Gastrocnemius medialis (tissue), 4 donors: ENCODE measurements at regions of chr18 and their contacts with region 1.

Region 1: GRCh38 chr18:36284671-36285295 is 12.7 kb upstream of the FHOD3 start:
- DNase-seq: no peak
- ATAC-seq: peak; percentile 58 to 62
- H3K4me3 ChIP-seq: no peak overlapping the region
- H3K27ac ChIP-seq: no peak overlapping the region
- H3K4me1 ChIP-seq: no peaks in the 10 kb centered on the region
- H3K27me3 ChIP-seq: peaks cover 0 to 6% (median 0%) of the 10 kb centered on the region in 3 donors
- CTCF ChIP-seq: peak; percentile 71 to 88 (median 83)
- POLR2A ChIP-seq: no peak

Region 2: GRCh38 chr18:35756506-35757117 is 528.2 kb before region 1 on chr18:
- in situ Hi-C with region 1: loop called in 3 of 4 experiments (anchors 10 to 25 kb)
- intact Hi-C with region 1: loop called (anchors 5 kb)
- DNase-seq: peak in 1 of 2 donors; percentile 22
- ATAC-seq: peak; percentile 54 to 66
- H3K4me3 ChIP-seq: no peak overlapping the region
- H3K27ac ChIP-seq: no peak overlapping the region
- H3K4me1 ChIP-seq: no peaks in the 10 kb centered on the region
- H3K27me3 ChIP-seq: no peaks in the 10 kb centered on the region
- CTCF ChIP-seq: peak; percentile 46 to 73 (median 60)
- POLR2A ChIP-seq: no peak

Region 3: DNA sequence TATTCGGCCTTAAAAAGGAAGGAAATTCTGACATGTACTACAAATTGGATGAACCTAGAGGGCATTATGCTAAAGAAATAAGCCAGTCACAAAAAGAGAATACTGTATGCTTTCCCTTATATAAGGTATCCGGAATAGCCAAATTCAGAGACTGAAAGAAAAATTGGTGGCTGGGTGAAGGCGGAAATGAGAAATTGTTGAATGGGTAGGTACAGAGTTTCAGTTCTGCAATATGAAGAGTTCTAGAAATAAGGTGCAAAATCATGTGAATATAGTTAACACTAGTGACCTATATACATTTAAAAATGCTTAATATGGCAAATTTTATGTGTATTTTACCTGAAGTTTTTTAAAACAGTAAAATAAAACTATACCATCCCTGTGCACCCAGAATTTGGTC is 269.2 kb before region 1 on chr18:
- in situ Hi-C with region 1: loop called in 3 of 4 experiments (anchors 5 to 10 kb)
- intact Hi-C with region 1: loop called (anchors 1 kb)
- DNase-seq: no peak
- ATAC-seq: no peak
- H3K4me3 ChIP-seq: no peak overlapping the region
- H3K27ac ChIP-seq: no peak overlapping the region
- H3K4me1 ChIP-seq: peaks cover 3% of the 10 kb centered on the region in 2 donors
- H3K27me3 ChIP-seq: no peaks in the 10 kb centered on the region
- CTCF ChIP-seq: no peak
- POLR2A ChIP-seq: no peak

Region 4: DNA sequence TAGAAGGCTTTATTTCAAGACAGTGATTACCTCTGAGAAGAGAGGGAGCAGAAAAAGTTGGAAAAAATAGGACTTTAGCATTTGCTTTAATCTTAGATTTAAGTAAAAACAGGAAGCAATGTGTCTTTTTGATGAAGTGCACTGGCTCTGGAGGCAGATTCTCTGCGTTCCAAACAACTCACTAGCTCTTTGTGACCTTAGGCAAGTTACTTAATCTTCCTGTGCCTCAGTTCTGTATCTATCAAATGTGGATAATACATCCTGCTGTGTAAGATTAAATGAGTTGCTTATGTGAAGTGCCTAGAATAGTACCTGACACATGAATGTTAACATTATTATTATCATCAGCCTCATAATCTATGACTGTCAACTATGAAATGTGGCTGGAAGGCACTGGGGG is 259.8 kb before region 1 on chr18:
- in situ Hi-C with region 1: loop called in 2 of 4 experiments (anchors 5 to 10 kb)
- intact Hi-C with region 1: no loop called
- DNase-seq: no peak
- ATAC-seq: no peak
- H3K4me3 ChIP-seq: no peak overlapping the region
- H3K27ac ChIP-seq: no peak overlapping the region
- H3K4me1 ChIP-seq: no peaks in the 10 kb centered on the region
- H3K27me3 ChIP-seq: no peaks in the 10 kb centered on the region
- CTCF ChIP-seq: no peak
- POLR2A ChIP-seq: no peak

Region 5: DNA sequence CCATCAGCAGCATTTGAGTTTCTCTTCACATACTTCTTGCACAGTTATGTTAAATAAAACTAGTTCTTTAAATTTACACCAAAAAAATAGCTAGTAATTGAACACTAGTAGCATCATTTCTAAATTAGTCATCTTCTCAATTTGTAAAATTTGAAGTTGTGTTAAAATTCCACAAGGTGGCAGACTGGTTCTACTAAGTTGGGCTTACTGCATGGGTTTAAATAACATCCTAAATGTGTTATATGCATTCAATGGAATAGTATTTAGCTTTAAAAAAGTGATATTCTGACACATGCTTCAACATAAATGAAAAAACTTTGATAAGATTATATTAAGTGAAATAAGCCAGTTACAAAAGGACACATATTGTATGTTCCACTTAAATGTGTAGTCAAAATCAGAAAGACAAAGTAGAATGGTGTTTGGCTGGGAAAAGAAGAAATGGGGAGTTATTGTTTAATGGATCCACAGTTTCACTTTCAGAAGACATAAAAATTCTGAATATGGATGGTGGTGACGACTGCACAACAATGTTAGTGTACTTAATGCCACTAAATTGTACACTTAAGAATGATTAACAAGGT is 188.8 kb before region 1 on chr18:
- in situ Hi-C with region 1: loop called (anchors 5 to 10 kb)
- intact Hi-C with region 1: loop called (anchors 1 kb)
- DNase-seq: no peak
- ATAC-seq: no peak
- H3K4me3 ChIP-seq: no peak overlapping the region
- H3K27ac ChIP-seq: no peak overlapping the region
- H3K4me1 ChIP-seq: peaks cover 0 to 6% of the 10 kb centered on the region in 2 donors
- H3K27me3 ChIP-seq: no peaks in the 10 kb centered on the region
- CTCF ChIP-seq: peak in 4 of 5 experiments; percentile 29 to 46 (median 30)
- POLR2A ChIP-seq: no peak

Region 6: DNA sequence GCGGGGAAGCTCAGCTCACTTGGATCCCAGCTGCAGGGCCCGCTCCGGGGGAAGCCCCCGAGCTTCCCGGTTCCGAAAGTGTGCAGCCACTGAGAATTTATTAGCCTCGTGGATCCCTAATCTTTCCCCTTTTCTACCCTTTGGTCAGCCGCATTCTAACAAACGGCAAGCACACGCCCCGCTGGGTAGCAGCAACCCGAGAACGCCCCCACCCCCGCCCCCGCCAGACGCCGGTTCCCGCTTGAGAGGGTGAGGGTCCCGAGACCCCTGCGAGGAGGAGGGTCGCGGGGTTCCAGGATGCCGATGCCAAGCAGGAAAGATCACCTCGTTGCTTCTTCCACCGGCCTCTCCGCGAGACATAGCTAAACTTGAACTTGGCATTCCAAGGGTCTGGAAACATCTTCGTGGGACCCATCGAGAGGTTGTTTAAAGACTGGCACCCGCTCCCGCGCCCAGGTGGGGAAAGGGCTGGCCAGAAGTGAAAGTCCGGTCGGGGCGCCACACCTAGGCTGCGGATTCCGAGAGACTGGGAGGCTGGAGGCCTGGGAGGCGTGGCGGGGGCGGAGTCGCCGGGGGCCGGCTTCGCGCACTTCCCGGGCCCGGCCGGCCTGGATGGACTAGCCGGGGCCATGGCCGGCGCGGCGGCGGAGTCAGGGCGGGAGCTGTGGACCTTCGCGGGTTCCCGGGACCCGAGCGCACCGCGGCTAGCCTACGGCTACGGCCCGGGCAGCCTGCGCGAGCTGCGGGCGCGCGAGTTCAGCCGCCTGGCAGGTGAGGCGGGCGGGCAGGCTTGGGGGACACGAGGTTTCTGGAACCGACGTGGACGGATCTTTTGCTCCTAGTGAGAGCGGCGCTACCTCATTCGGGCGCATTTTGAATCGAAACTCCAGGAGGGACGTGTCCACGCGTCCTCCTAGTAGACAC is 97.6 kb before region 1 on chr18 and contains the start of gene MOCOS:
- in situ Hi-C with region 1: no loop called
- intact Hi-C with region 1: loop called (anchors 10 kb)
- DNase-seq: peak; percentile 43 to 50
- ATAC-seq: peak; percentile 74
- H3K4me3 ChIP-seq: peak within 1 kb of the TSS; percentile 66 to 83 (median 75)
- H3K27ac ChIP-seq: peak within 1 kb of the TSS in 3 of 4 donors; percentile 4 to 58 (median 24)
- H3K4me1 ChIP-seq: peaks cover 4 to 8% of the 10 kb centered on the region in 2 donors
- H3K27me3 ChIP-seq: peaks cover 5 to 19% (median 19%) of the 10 kb centered on the region in 3 donors
- CTCF ChIP-seq: no peak
- POLR2A ChIP-seq: peak in 1 of 2 donors; percentile 30
- total RNA-seq, gene MOCOS: 0.46 to 2.8 (median 0.73) TPM

Region 7: DNA sequence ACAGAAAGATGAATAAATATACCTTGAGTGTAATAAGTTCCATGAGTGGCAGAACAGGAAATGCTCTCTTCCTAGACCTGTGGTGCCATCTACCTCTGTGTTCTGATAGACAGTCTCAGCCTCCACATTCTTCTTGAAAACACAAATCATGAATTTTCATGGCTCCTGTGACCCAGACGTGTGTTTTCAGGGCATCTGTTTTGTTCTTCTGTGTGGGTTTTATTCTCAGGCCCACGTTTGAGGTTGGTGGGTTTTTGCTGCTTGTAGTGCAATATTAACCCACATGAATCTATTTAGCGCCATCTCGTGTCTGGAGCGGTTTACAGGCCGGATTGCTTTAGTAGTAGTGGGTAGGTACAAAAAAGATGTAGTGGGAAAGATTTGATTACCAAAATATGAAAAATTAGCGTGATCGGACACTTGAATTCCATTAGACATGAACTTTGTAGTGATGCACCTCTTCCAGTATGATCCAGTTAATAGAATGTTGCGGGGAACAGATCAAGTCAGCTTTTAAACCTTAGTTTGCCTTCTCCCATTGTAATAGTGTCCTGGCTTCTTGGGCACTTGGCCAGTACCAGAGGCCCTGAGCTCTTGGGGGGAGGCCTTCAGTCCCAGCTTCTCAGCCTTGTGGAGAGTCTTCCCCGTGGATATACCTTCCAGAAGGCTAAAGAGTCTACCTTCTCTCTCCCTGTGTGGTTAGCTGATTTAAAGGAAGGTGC is 287.5 kb after region 1 on chr18:
- in situ Hi-C with region 1: loop called in 2 of 4 experiments (anchors 10 to 25 kb)
- intact Hi-C with region 1: no loop called
- DNase-seq: peak in 1 of 2 donors; percentile 42
- ATAC-seq: peak; percentile 77 to 90
- H3K4me3 ChIP-seq: no peak overlapping the region
- H3K27ac ChIP-seq: no peak overlapping the region
- H3K4me1 ChIP-seq: peaks cover 0 to 6% of the 10 kb centered on the region in 2 donors
- H3K27me3 ChIP-seq: no peaks in the 10 kb centered on the region
- CTCF ChIP-seq: peak; percentile 25 to 56 (median 50)
- POLR2A ChIP-seq: no peak